HCT116 (cell line): ENCODE measurements at regions of chr2 and their contacts with region 1.

Region 1: DNA sequence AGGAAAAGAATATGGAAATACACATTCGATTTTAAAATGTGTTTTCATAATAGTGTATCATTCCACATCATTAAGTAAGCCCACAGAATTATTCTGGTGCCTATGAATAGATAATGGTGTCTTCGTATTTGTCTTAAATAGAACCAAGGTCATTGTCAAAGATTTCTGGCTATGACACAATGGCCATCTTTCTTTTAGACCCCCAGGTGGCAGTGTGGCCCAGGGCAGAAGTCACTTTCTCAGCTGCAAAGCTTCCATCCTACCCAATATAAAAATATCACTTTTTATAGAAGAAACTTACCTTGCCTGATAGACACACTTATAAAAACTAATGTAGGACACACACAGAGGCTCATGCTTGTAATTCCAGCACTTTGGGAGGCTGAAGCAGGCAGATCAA is 57.5 kb downstream of the ZRANB3 start:
- DNase-seq: no peak
- ATAC-seq: peak; percentile 67
- H3K4me3 ChIP-seq: no peak overlapping the region
- H3K27ac ChIP-seq: no peak overlapping the region
- H3K4me1 ChIP-seq: no peaks in the 10 kb centered on the region
- H3K27me3 ChIP-seq: no peaks in the 10 kb centered on the region
- CTCF ChIP-seq: peak; percentile 47 to 76 (median 74); a peak in 5 of 6 replicates
- POLR2A ChIP-seq: no peak
- RAD21 ChIP-seq: peak; percentile 83

Region 2: DNA sequence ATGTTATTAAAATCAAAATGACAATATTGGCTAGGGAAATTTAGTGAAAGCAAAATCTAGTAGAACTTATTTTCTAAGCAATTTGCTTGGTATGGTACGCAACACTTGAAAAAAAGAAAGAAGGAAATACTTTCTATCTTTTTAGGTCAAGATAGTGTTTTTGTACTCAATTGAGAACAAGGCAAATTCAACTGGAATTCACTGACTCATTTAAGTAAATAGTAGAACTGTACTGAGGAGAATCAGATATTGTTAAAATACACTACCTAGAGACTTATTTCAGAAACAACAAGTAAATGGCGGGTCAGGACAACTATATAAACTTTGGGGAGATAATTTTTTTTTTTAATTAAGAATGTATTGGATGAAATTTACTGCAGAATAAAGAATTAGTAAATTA is 38.5 kb after region 1 on chr2:
- CTCF ChIA-PET with region 1: no interaction called
- POLR2A ChIA-PET with region 1: no interaction called
- RAD21 ChIA-PET with region 1: no interaction called
- intact Hi-C with region 1: no loop called
- DNase-seq: no peak
- ATAC-seq: no peak
- H3K4me3 ChIP-seq: no peak overlapping the region
- H3K27ac ChIP-seq: no peak overlapping the region
- H3K4me1 ChIP-seq: no peaks in the 10 kb centered on the region
- H3K27me3 ChIP-seq: no peaks in the 10 kb centered on the region
- CTCF ChIP-seq: no peak
- POLR2A ChIP-seq: no peak
- RAD21 ChIP-seq: no peak

Region 3: GRCh38 chr2:135585586-135585985 is 112.0 kb after region 1 on chr2:
- CTCF ChIA-PET with region 1: interaction called, 5 read pairs
- POLR2A ChIA-PET with region 1: no interaction called
- RAD21 ChIA-PET with region 1: no interaction called
- intact Hi-C with region 1: loop called (anchors 5 kb)
- DNase-seq: no peak
- ATAC-seq: no peak
- H3K4me3 ChIP-seq: no peak overlapping the region
- H3K27ac ChIP-seq: no peak overlapping the region
- H3K4me1 ChIP-seq: no peaks in the 10 kb centered on the region
- H3K27me3 ChIP-seq: no peaks in the 10 kb centered on the region
- CTCF ChIP-seq: peak in 1 of 3 experiments; percentile 28; a peak in 1 of 6 replicates
- POLR2A ChIP-seq: no peak
- RAD21 ChIP-seq: no peak; the same call in 1 of the 2 replicates